Sciatic nerve (tissue), 2 donors: ENCODE measurements at regions of chr3 and their contacts with region 1.

Region 1: DNA sequence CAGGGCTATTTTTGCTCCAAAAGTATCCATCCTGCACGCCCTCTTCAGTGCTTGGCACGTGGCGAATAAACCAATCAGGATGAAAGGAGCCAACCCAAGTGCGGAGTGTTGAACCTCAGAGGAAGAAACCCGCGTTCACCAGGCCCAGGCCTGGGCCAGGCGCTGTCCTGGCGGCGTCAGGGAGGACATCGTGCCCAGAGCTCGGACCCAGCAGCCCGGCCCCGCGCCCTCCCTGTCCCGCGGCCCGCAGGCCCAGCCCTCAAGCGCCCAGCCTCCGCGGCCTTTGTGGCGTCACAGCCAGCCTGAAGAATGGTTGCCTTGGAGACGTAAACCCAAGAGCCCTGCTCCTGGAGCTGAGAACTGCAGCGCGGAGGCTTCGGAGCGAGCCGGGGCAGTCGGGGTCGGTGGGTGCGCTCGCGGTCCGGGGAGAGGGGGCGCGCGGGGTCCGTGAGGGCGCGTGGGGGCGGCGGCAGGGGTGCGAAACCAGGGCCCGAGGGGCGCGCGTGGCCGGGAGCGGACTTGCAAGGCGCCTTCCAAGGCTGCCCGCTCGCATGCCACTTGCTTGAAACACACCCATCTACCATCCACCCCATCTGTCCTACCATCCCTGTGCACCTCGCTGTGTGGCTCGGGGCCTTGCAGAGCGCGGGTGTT is at the start of gene CFAP100:
- DNase-seq: peak; percentile 73
- ATAC-seq: peak; percentile 90
- total RNA-seq, gene CFAP100: 1.5 TPM

Region 2: DNA sequence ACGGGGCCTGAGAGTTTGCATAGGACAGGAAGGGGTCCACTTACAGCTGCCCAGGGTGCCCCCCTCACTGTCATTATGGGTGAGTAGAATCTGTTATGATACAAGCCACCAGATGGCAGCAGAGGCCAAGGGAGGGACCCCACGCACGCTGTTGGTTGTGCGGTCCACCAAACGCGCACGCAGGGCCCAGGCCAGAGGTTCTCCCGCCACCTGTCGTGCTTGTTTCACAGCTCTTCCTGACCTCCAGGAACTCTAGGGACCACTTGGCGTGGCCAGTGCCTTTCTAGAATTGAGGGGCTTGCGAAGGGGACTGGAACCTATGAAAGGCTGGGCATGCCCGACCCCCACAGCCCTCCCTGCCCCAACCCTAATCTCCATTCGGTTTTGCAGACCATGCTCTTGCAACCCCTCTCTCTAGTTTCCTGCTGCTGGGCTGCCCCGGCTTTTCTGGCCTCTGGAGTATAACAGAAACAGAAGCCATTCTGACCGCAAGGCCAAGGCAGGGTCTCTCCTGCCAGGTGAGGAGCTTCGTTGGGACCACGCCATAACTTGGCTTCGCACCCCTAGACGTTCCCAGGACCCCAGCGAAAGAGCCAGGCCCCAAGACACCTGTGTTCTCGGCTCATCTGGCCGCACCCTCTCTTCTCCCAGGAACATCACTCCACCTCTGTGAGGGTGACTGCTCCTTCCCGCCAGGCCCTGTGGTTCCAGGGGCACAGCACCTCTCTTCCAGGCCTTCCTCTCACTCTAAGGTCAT is 260.3 kb before region 1 on chr3:
- intact Hi-C with region 1: loop called (anchors 5 kb)
- DNase-seq: peak; percentile 79
- ATAC-seq: peak; percentile 89

Region 3: GRCh38 chr3:126342991-126343648 is 51.6 kb before region 1 on chr3:
- intact Hi-C with region 1: no loop called
- DNase-seq: peak; percentile 58
- ATAC-seq: peak; percentile 33